GM12878 (cell line): ENCODE measurements at regions of chr6 and their contacts with region 1.

Region 1: GRCh38 chr6:138765896-138766655 is 7.5 kb upstream of the CCDC28A start:
- DNase-seq: no peak
- ATAC-seq: 0 out of 3 replicates have a peak, but pooled peaks have one; percentile 17
- H3K4me3 ChIP-seq: no peak overlapping the region
- H3K27ac ChIP-seq: no peak overlapping the region
- H3K4me1 ChIP-seq: peaks cover 12% of the 10 kb centered on the region
- H3K27me3 ChIP-seq: no peaks in the 10 kb centered on the region
- CTCF ChIP-seq: peak; percentile 39 to 64 (median 50); a peak in 5 of 6 replicates
- EP300 ChIP-seq: no peak
- POLR2A ChIP-seq: no peak
- RAD21 ChIP-seq: peak; percentile 78

Region 2: DNA sequence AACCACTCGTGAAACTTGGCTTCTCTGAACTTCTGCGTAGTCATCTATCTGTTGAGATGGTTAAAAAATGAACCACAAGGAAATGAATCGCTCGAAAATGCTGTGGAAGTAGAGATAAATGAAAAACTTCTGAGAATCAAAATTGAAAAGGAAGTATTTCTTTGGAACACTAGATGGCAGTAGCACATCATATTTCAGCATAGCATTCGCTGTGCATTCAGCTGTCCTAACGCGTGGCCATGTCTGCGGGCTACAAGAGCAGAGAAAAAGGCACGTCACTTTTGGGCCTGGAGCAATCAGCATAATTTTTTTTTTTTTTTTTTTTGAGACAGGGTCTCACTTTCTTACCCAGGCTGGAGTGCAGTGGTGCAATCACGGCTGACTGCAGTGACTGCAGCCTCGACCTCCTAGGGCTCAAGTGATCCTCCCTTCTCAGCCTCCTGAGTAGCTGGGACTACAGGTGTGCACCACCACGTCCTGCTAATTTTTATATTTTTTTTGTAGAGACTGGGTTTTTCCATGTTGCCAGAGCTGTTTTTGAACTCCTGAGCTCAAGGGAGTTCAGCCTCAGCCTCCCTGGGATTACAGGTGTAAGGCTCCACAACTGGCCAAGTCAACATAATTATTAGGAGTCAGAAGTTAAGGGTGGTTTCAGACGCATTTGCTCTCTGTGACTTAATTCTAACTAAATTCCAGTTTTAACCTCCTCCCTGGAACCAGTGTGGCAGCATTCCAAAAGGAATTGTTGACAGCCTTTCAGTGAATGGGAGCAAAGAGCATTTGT is 650.0 kb before region 1 on chr6:
- CTCF ChIA-PET with region 1: interaction called, 31 read pairs
- POLR2A ChIA-PET with region 1: no interaction called
- RAD21 ChIA-PET with region 1: interaction called, 14 read pairs
- SMC1A ChIA-PET with region 1: interaction called, 13 read pairs
- in situ Hi-C with region 1: no loop called
- intact Hi-C with region 1: loop called (anchors 5 kb)
- DNase-seq: peak; percentile 33
- ATAC-seq: peak; percentile 97
- H3K4me3 ChIP-seq: no peak overlapping the region
- H3K27ac ChIP-seq: no peak overlapping the region
- H3K4me1 ChIP-seq: no peaks in the 10 kb centered on the region
- H3K27me3 ChIP-seq: peaks cover 0 to 2% of the 10 kb centered on the region in 2 experiments; a peak in 1 of 4 replicates
- CTCF ChIP-seq: peak; percentile 53 to 86 (median 64); a peak in 5 of 6 replicates
- EP300 ChIP-seq: no peak
- POLR2A ChIP-seq: no peak
- RAD21 ChIP-seq: peak; percentile 82

Region 3: GRCh38 chr6:138428944-138429598 is 337.0 kb before region 1 on chr6:
- CTCF ChIA-PET with region 1: interaction called, 11 read pairs
- POLR2A ChIA-PET with region 1: no interaction called
- RAD21 ChIA-PET with region 1: interaction called, 23 read pairs
- SMC1A ChIA-PET with region 1: interaction called, 16 read pairs
- in situ Hi-C with region 1: loop called (anchors 5 kb)
- intact Hi-C with region 1: loop called (anchors 5 kb)
- DNase-seq: no peak
- ATAC-seq: peak; percentile 80
- H3K4me3 ChIP-seq: no peak overlapping the region
- H3K27ac ChIP-seq: no peak overlapping the region
- H3K4me1 ChIP-seq: no peaks in the 10 kb centered on the region
- H3K27me3 ChIP-seq: no peaks in the 10 kb centered on the region
- CTCF ChIP-seq: peak; percentile 38 to 69 (median 55); a peak in 5 of 6 replicates
- EP300 ChIP-seq: no peak
- POLR2A ChIP-seq: no peak
- RAD21 ChIP-seq: peak; percentile 81

Region 4: GRCh38 chr6:138555421-138555988 is 210.6 kb before region 1 on chr6:
- CTCF ChIA-PET with region 1: interaction called, 12 read pairs
- POLR2A ChIA-PET with region 1: no interaction called
- RAD21 ChIA-PET with region 1: interaction called, 4 read pairs
- SMC1A ChIA-PET with region 1: no interaction called
- in situ Hi-C with region 1: no loop called
- intact Hi-C with region 1: no loop called
- DNase-seq: peak; percentile 8
- ATAC-seq: peak; percentile 75
- H3K4me3 ChIP-seq: no peak overlapping the region
- H3K27ac ChIP-seq: no peak overlapping the region
- H3K4me1 ChIP-seq: no peaks in the 10 kb centered on the region
- H3K27me3 ChIP-seq: no peaks in the 10 kb centered on the region
- CTCF ChIP-seq: no peak
- EP300 ChIP-seq: 0 out of 4 replicates have a peak, but pooled peaks of 1 of the 2 experiments have one; percentile 16
- POLR2A ChIP-seq: no peak
- RAD21 ChIP-seq: no peak

Region 5: GRCh38 chr6:138638604-138639003 is 127.5 kb before region 1 on chr6:
- CTCF ChIA-PET with region 1: interaction called, 10 read pairs
- POLR2A ChIA-PET with region 1: no interaction called
- RAD21 ChIA-PET with region 1: interaction called, 18 read pairs
- SMC1A ChIA-PET with region 1: interaction called, 16 read pairs
- in situ Hi-C with region 1: no loop called
- intact Hi-C with region 1: no loop called
- DNase-seq: no peak
- ATAC-seq: no peak; the same call in 1 of the 3 replicates
- H3K4me3 ChIP-seq: peak overlapping the region; percentile 52; the same call in 1 of the 2 replicates
- H3K27ac ChIP-seq: no peak overlapping the region
- H3K4me1 ChIP-seq: no peaks in the 10 kb centered on the region
- H3K27me3 ChIP-seq: no peaks in the 10 kb centered on the region
- CTCF ChIP-seq: no peak
- EP300 ChIP-seq: no peak
- POLR2A ChIP-seq: no peak
- RAD21 ChIP-seq: no peak

Region 6: DNA sequence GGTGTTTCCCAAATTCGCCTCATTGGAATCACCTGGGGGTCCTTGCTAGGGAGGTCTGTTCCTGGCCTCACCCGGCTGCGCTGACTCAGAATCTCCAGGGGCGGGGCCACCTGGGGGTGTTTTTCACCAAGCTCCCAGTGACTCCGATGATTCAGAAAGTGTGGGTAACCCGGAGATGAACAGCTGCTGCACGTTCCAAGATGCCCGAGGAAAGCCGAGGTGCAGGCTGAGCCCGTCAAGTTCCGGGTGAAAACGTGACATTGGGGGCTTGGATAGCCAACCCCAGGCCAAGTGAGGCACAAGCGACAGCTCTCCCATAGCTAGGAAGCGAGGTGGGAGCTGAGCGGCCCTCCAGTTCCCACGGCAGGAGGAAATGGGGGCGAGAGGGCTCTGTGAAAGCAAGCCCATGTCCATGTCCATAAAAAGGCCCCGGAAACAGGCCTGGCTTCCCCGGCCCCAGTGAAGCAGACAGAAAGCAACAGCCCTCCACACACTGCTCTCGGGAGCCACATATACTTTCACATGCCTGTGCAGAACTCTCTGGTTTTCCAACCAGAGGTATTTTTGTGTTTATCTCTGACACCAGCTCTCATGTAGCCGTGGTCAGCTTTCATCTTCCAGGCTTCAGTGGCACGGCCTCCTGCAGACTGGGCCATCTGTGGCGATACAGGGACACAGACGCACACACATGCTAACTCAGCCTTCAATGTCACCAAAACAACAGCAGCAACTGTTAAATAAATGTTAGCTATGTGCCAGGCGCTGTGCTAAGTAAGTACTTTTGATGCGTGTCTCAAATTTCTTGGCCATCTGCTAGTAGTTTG is 83.2 kb before region 1 on chr6:
- CTCF ChIA-PET with region 1: interaction called, 17 read pairs
- POLR2A ChIA-PET with region 1: no interaction called
- RAD21 ChIA-PET with region 1: interaction called, 3 read pairs
- SMC1A ChIA-PET with region 1: interaction called, 13 read pairs
- in situ Hi-C with region 1: no loop called
- intact Hi-C with region 1: no loop called
- DNase-seq: no peak
- ATAC-seq: no peak
- H3K4me3 ChIP-seq: no peak overlapping the region
- H3K27ac ChIP-seq: no peak overlapping the region
- H3K4me1 ChIP-seq: no peaks in the 10 kb centered on the region
- H3K27me3 ChIP-seq: no peaks in the 10 kb centered on the region
- CTCF ChIP-seq: no peak
- EP300 ChIP-seq: no peak
- POLR2A ChIP-seq: no peak
- RAD21 ChIP-seq: no peak

Region 7: DNA sequence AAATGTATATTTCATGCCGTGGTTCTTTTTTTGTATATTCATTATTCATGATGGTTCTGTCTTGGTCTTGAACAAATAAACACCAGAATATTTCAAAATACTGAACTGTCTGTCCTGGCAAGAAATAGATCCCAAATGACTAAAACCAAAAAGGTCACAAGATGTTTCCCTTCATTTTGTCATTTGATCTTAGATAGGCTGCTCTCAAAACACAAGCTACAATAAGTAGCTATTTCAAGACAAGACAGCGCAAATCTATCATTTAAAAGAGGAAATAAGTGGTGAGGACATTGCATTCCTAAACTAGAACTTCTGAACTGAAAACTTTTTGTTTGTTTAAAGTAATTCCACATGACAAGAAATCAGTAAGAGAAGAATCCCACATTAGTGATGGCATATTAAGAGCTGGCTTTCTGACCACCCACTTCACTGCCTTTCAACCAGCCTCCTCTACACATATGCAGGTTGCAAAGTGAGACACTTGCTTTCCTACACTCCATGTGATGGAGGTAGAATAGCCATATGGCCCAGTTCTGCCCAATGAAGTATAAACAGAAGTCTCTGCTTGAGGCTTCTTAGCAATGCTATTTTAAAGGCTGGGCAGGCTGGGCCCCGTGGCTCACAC is 47.0 kb before region 1 on chr6:
- CTCF ChIA-PET with region 1: interaction called, 3 read pairs
- POLR2A ChIA-PET with region 1: no interaction called
- RAD21 ChIA-PET with region 1: interaction called, 11 read pairs
- SMC1A ChIA-PET with region 1: interaction called, 6 read pairs
- in situ Hi-C with region 1: no loop called
- intact Hi-C with region 1: no loop called
- DNase-seq: no peak
- ATAC-seq: peak; percentile 47
- H3K4me3 ChIP-seq: no peak overlapping the region
- H3K27ac ChIP-seq: no peak overlapping the region
- H3K4me1 ChIP-seq: no peaks in the 10 kb centered on the region
- H3K27me3 ChIP-seq: no peaks in the 10 kb centered on the region
- CTCF ChIP-seq: no peak
- EP300 ChIP-seq: no peak
- POLR2A ChIP-seq: no peak
- RAD21 ChIP-seq: no peak

Region 8: DNA sequence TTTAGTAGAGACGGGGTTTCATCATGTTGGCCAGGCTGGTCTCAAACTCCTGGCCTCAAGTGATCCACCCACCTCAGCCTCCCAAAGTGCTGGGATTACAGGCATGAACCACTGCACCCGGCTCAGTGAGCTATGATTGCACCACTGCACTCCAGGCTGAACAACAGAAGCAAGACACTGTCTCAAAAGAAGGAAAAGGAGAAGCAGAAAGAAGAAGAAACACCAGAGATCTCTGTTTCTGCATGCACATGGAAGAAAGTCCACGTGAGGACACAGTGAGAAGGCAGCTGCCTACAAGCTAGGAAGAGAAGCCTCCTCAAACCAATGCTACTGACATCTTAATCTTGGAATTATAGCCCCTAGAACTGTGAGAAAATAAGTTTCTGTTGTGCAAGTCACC is 45.8 kb after region 1 on chr6:
- CTCF ChIA-PET with region 1: no interaction called
- POLR2A ChIA-PET with region 1: no interaction called
- RAD21 ChIA-PET with region 1: no interaction called
- SMC1A ChIA-PET with region 1: no interaction called
- in situ Hi-C with region 1: no loop called
- intact Hi-C with region 1: no loop called
- DNase-seq: no peak
- ATAC-seq: no peak
- H3K4me3 ChIP-seq: no peak overlapping the region
- H3K27ac ChIP-seq: no peak overlapping the region
- H3K4me1 ChIP-seq: no peaks in the 10 kb centered on the region
- H3K27me3 ChIP-seq: no peaks in the 10 kb centered on the region; a peak in 1 of 4 replicates
- CTCF ChIP-seq: no peak
- EP300 ChIP-seq: no peak
- POLR2A ChIP-seq: no peak
- RAD21 ChIP-seq: no peak

Region 9: DNA sequence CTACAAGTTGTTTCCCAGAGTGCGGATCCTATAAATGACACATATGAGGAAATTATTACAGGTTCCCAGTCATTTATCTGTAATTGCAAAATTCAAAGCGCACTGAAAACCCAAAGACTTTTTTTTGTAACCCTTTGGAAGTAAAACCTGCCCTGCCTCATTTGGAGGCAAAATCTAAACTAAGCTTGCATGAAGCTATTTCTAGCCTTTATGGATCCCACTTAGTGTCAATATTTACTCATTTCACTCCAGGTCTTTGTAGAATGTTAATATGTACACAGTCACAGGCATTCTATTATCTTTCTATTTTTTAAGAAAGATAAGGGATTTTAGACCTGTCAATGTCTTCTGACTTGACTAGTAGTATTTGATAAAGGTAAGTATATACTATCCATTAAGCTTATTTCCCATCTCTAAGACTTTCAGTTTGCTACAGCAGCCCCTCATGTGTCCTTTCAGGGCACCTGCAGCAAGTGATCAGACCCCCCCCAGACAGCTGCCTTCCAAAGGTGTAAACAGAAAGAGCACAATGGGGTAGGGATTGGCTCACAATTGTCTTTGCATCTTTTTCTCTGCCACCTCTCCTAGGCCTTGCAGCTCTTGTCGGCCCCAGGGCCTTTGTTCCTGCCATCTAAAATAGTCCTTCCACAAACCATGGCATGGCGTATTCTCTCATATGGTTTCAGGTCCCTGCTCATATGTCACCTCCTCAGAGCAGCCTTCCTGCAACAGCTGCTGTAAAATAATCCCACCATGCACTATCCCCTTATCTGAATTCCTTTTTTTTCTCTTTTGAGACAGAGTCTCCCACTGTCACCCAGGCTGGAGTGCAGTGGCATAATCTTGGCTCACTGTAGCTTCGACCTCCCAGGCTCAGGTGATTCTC is 223.3 kb after region 1 on chr6:
- CTCF ChIA-PET with region 1: no interaction called
- POLR2A ChIA-PET with region 1: no interaction called
- RAD21 ChIA-PET with region 1: no interaction called
- SMC1A ChIA-PET with region 1: no interaction called
- in situ Hi-C with region 1: no loop called
- intact Hi-C with region 1: no loop called
- DNase-seq: no peak
- ATAC-seq: no peak
- H3K4me3 ChIP-seq: no peak overlapping the region
- H3K27ac ChIP-seq: no peak overlapping the region
- H3K4me1 ChIP-seq: no peaks in the 10 kb centered on the region
- H3K27me3 ChIP-seq: no peaks in the 10 kb centered on the region
- CTCF ChIP-seq: no peak
- EP300 ChIP-seq: no peak
- POLR2A ChIP-seq: no peak
- RAD21 ChIP-seq: no peak